CD8-positive, alpha-beta T cell (primary cell): ENCODE measurements at regions of chr6 and their contacts with region 1.

Region 1: GRCh38 chr6:137927777-137928218 is 60.7 kb downstream of the TNFAIP3 start:
- DNase-seq: peak; percentile 49 to 95 (median 75)
- ATAC-seq: peak; percentile 99
- H3K4me3 ChIP-seq: no peak overlapping the region
- H3K4me3 Mint-ChIP-seq: peak overlapping the region; percentile 36
- H3K27ac ChIP-seq: peak overlapping the region; percentile 21 to 59
- H3K27ac Mint-ChIP-seq: peak overlapping the region; percentile 91
- H3K4me1 ChIP-seq: peaks cover 38% of the 10 kb centered on the region
- H3K4me1 Mint-ChIP-seq: peaks cover 41% of the 10 kb centered on the region
- H3K27me3 ChIP-seq: no peaks in the 10 kb centered on the region
- H3K27me3 Mint-ChIP-seq: no peaks in the 10 kb centered on the region
- CTCF ChIP-seq: no peak

Region 2: DNA sequence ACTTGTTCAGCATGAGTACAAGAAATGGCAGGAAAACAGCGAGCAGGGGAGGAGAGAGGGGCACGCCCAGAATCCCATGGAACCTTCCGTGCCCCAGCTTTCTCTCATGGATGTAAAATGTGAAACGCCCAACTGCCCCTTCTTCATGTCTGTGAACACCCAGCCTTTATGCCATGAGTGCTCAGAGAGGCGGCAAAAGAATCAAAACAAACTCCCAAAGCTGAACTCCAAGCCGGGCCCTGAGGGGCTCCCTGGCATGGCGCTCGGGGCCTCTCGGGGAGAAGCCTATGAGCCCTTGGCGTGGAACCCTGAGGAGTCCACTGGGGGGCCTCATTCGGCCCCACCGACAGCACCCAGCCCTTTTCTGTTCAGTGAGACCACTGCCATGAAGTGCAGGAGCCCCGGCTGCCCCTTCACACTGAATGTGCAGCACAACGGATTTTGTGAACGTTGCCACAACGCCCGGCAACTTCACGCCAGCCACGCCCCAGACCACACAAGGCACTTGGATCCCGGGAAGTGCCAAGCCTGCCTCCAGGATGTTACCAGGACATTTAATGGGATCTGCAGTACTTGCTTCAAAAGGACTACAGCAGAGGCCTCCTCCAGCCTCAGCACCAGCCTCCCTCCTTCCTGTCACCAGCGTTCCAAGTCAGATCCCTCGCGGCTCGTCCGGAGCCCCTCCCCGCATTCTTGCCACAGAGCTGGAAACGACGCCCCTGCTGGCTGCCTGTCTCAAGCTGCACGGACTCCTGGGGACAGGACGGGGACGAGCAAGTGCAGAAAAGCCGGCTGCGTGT is 49.1 kb before region 1 on chr6:
- CTCF ChIA-PET with region 1: interaction called, 3 read pairs
- POLR2A ChIA-PET with region 1: interaction called, 4 read pairs
- intact Hi-C with region 1: loop called in 1 of 2 experiments (anchors 2 kb)
- DNase-seq: peak in 3 of 9 experiments; percentile 40 to 59 (median 45)
- ATAC-seq: no peak
- H3K4me3 ChIP-seq: no peak overlapping the region
- H3K4me3 Mint-ChIP-seq: peak overlapping the region; percentile 51
- H3K27ac ChIP-seq: no peak overlapping the region
- H3K27ac Mint-ChIP-seq: peak overlapping the region; percentile 45
- H3K4me1 ChIP-seq: peaks cover 40% of the 10 kb centered on the region
- H3K4me1 Mint-ChIP-seq: peaks cover 67% of the 10 kb centered on the region
- H3K27me3 ChIP-seq: no peaks in the 10 kb centered on the region
- H3K27me3 Mint-ChIP-seq: no peaks in the 10 kb centered on the region
- CTCF ChIP-seq: no peak